Activated B cell treated with CpG ODN at 0.5 μM for 24 hours (primary cell): ENCODE measurements at regions of chr9 and their contacts with region 1.

Region 1: GRCh38 chr9:109401168-109401989 is 80.5 kb upstream of the EPB41L4B start:
- DNase-seq: no peak
- ATAC-seq: peak; percentile 51
- H3K4me3 Mint-ChIP-seq: peak overlapping the region; percentile 53
- H3K27ac Mint-ChIP-seq: peak overlapping the region; percentile 62
- H3K4me1 Mint-ChIP-seq: peaks cover 45% of the 10 kb centered on the region
- H3K27me3 Mint-ChIP-seq: peaks cover 13% of the 10 kb centered on the region
- CTCF ChIP-seq: no peak

Region 2: DNA sequence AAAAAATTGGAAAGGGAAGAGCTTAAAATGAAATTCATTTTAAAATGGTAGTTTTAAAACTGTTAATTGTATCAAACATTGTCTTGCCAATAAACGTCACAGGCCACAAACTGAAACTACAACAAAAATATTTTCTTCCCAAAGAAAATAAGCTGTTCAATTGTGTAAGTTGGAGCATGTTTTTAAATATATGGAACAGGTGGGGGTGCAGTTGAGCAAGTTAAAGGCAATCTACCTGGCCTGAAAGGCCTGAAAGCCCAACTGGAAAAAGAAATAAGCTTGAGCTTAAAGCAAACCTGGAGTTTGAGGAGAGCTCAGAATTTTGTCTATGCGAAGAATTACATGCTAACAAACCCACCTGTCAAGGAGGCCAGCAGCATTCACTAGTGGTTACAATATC is 985.1 kb before region 1 on chr9:
- CTCF ChIA-PET with region 1: no interaction called
- POLR2A ChIA-PET with region 1: no interaction called
- intact Hi-C with region 1: no loop called
- DNase-seq: no peak
- ATAC-seq: no peak
- H3K4me3 Mint-ChIP-seq: no peak overlapping the region
- H3K27ac Mint-ChIP-seq: no peak overlapping the region
- H3K4me1 Mint-ChIP-seq: no peaks in the 10 kb centered on the region
- H3K27me3 Mint-ChIP-seq: peaks cover 3% of the 10 kb centered on the region
- CTCF ChIP-seq: no peak

Region 3: DNA sequence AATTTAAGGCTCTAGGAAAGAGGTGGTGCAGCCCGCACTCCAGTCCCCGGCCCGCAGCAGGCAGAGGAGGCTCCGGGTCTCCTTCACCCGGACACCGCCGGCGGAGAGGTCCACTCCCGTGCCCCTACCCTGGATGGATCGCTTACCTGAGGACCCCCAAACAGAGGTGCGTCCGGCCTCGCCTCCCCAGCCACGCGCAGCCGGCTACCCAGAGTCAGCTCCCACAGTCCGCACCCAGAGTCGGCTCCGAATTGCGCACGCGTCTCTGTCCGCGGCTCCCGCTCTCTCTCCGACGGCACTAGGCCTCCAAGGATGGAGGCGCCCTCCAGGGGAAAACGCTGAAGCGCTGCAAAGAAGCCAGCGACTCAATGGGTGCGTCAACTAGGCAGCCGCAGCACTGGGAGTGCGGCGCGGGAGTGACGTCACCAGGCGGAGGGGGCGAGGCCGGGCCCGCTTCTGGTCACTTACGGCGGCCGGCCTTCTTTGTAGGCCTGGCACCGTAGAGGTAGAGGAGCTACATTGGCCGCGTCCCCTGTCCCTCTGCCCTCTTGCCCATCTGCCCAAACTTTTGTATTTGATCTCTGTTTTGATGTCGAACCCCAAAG is 467.6 kb before region 1 on chr9 and contains the start of gene ELP1:
- CTCF ChIA-PET with region 1: no interaction called
- POLR2A ChIA-PET with region 1: no interaction called
- intact Hi-C with region 1: loop called (anchors 1 kb)
- DNase-seq: peak; percentile 86
- ATAC-seq: peak; percentile 83
- H3K4me3 Mint-ChIP-seq: peak within 1 kb of the TSS; percentile 97
- H3K27ac Mint-ChIP-seq: peak within 1 kb of the TSS; percentile 89
- H3K4me1 Mint-ChIP-seq: peaks cover 23% of the 10 kb centered on the region
- H3K27me3 Mint-ChIP-seq: no peaks in the 10 kb centered on the region
- CTCF ChIP-seq: no peak
- total RNA-seq, gene ELP1: 20.3 and 25.0 TPM in 2 replicates

Region 4: GRCh38 chr9:109119439-109120203 is 281.8 kb before region 1 on chr9 and contains the start of gene TMEM245:
- CTCF ChIA-PET with region 1: no interaction called
- POLR2A ChIA-PET with region 1: interaction called, 6 read pairs
- intact Hi-C with region 1: loop called (anchors 5 kb)
- DNase-seq: peak; percentile 86
- ATAC-seq: peak; percentile 95
- H3K4me3 Mint-ChIP-seq: peak within 1 kb of the TSS; percentile 88
- H3K27ac Mint-ChIP-seq: peak within 1 kb of the TSS; percentile 82
- H3K4me1 Mint-ChIP-seq: peaks cover 36% of the 10 kb centered on the region
- H3K27me3 Mint-ChIP-seq: no peaks in the 10 kb centered on the region
- CTCF ChIP-seq: no peak
- total RNA-seq, gene TMEM245: 16.1 and 20.6 TPM in 2 replicates

Region 5: GRCh38 chr9:109244157-109245132 is 156.9 kb before region 1 on chr9:
- CTCF ChIA-PET with region 1: interaction called, 6 read pairs
- POLR2A ChIA-PET with region 1: interaction called, 4 read pairs
- intact Hi-C with region 1: loop called (anchors 1 kb)
- DNase-seq: peak; percentile 42
- ATAC-seq: peak; percentile 88
- H3K4me3 Mint-ChIP-seq: no peak overlapping the region
- H3K27ac Mint-ChIP-seq: no peak overlapping the region
- H3K4me1 Mint-ChIP-seq: peaks cover 4% of the 10 kb centered on the region
- H3K27me3 Mint-ChIP-seq: peaks cover 13% of the 10 kb centered on the region
- CTCF ChIP-seq: peak; percentile 48

Region 6: GRCh38 chr9:109349421-109349846 is 51.9 kb before region 1 on chr9:
- CTCF ChIA-PET with region 1: no interaction called
- POLR2A ChIA-PET with region 1: no interaction called
- intact Hi-C with region 1: loop called (anchors 5 kb)
- DNase-seq: no peak
- ATAC-seq: no peak
- H3K4me3 Mint-ChIP-seq: no peak overlapping the region
- H3K27ac Mint-ChIP-seq: no peak overlapping the region
- H3K4me1 Mint-ChIP-seq: no peaks in the 10 kb centered on the region
- H3K27me3 Mint-ChIP-seq: peaks cover 6% of the 10 kb centered on the region
- CTCF ChIP-seq: no peak

Region 7: DNA sequence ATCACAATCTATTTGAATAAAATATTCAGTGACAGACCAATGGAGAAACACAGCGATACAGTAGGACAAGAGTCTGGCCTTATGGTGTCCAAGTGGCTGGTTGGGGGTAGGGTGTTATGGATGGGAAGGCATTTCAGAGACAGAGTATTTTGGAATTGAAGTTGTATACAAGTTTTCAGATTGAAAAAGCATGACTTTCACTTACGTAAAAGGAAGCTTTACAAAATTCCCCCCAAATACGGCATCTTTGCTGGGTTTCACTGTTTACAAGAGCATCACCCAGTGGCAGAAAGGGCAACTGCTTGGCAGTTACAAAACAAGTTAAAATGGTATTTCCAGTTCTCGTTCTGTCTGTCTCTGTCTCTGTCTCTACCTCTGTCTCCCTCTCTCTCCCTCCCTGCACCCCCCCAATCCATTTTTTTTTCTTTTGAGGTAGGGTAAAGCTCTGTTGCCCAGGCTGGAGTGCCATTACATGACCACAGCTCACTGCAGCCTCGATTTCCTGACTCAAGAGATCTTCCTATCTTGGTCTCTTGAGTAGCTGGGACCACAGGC is 10.5 kb after region 1 on chr9:
- CTCF ChIA-PET with region 1: interaction called, 29 read pairs
- POLR2A ChIA-PET with region 1: interaction called, 26 read pairs
- intact Hi-C with region 1: loop called (anchors 1 kb)
- DNase-seq: no peak
- ATAC-seq: peak; percentile 53
- H3K4me3 Mint-ChIP-seq: peak overlapping the region; percentile 62
- H3K27ac Mint-ChIP-seq: peak overlapping the region; percentile 89
- H3K4me1 Mint-ChIP-seq: peaks cover 60% of the 10 kb centered on the region
- H3K27me3 Mint-ChIP-seq: peaks cover 3% of the 10 kb centered on the region
- CTCF ChIP-seq: no peak